OCI-LY7 (cell line): ENCODE measurements at regions of chr4 and their contacts with region 1.

Region 1: DNA sequence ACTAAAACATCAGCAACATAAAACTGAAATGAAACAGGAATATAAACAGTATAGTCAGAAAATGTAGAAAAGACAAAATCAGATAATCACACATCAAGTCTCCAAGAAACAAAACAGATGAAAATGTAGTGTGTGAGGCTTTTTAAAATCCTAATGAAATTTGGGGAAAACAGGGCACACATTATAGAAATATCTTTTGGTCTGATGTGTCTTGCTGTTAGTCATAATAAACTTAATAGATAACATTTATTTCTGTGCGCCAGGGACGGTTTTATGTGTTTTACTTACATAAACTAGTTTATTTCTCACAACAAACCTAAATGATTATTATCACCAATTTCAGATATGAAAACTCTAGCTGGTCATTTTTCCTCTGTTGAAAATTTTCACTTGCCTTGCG is 293.9 kb upstream of the GATB start:
- DNase-seq: no peak
- H3K4me3 ChIP-seq: no peak overlapping the region
- H3K27ac ChIP-seq: no peak overlapping the region
- H3K4me1 ChIP-seq: no peaks in the 10 kb centered on the region
- CTCF ChIP-seq: no peak

Region 2: DNA sequence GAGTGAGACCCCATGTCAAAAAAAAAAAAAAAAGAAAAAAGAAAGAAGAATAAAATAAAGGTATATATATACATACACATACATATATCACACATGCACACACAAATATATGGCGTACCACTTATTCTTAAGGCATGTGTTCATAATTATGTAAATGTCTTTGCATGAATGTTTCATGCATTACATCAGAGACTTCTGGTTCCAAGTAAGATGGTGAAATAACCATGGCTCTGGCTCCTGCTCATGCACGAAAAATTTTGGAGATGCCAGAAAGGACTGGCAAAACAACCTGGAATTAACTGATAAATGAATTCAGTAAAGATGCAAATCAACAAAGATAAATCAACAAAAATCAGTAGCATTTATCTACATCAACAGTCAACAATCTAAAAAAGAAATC is 665.4 kb before region 1 on chr4:
- CTCF ChIA-PET with region 1: no interaction called
- POLR2A ChIA-PET with region 1: no interaction called
- intact Hi-C with region 1: loop called (anchors 5 kb)
- DNase-seq: no peak
- H3K4me3 ChIP-seq: no peak overlapping the region
- H3K27ac ChIP-seq: no peak overlapping the region
- H3K4me1 ChIP-seq: no peaks in the 10 kb centered on the region
- CTCF ChIP-seq: no peak

Region 3: GRCh38 chr4:151489462-151490203 is 565.1 kb before region 1 on chr4:
- CTCF ChIA-PET with region 1: no interaction called
- POLR2A ChIA-PET with region 1: no interaction called
- intact Hi-C with region 1: no loop called
- DNase-seq: no peak
- H3K4me3 ChIP-seq: no peak overlapping the region
- H3K27ac ChIP-seq: no peak overlapping the region
- H3K4me1 ChIP-seq: no peaks in the 10 kb centered on the region
- CTCF ChIP-seq: peak; percentile 27; the same call in 1 of the 2 replicates